ENCODE measurements at regions of chr4 and their contacts with region 1.

Region 1: DNA sequence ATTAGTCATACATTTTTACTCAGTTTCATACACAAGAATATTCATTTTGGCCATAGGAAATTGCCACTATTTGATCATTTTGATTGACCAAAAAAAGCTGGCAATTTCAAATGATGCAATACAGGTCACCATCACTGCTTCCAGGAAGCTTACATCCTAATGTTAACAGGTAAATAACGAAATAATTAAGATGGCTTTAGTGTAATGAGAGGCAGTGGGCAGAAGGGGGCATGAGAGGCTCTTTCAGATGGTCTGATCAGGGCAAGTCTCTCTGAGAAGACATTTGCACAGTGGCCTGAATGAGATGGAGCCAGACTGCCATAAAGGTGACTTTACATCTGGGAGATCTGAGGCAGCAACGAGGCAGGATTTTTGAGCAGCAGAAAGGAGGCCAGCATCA is 170.7 kb downstream of the SLIT2 start:
- DNase-seq: peak; percentile 22
- ATAC-seq: peak; percentile 51
- H3K4me3 ChIP-seq: no peak overlapping the region
- H3K4me3 Mint-ChIP-seq: no peak overlapping the region
- H3K27ac ChIP-seq: no peak overlapping the region
- H3K27ac Mint-ChIP-seq: no peak overlapping the region
- H3K4me1 ChIP-seq: no peaks in the 10 kb centered on the region
- H3K4me1 Mint-ChIP-seq: peaks cover 8% of the 10 kb centered on the region
- H3K27me3 ChIP-seq: no peaks in the 10 kb centered on the region
- H3K27me3 Mint-ChIP-seq: peaks cover 11% of the 10 kb centered on the region
- CTCF ChIP-seq: peak; percentile 36

Region 2: GRCh38 chr4:18689308-18690115 is 1732.9 kb before region 1 on chr4:
- CTCF ChIA-PET with region 1: no interaction called
- POLR2A ChIA-PET with region 1: no interaction called
- intact Hi-C with region 1: loop called (anchors 10 kb)
- DNase-seq: peak; percentile 48
- ATAC-seq: peak; percentile 28
- H3K4me3 ChIP-seq: no peak overlapping the region
- H3K4me3 Mint-ChIP-seq: no peak overlapping the region
- H3K27ac ChIP-seq: no peak overlapping the region
- H3K27ac Mint-ChIP-seq: no peak overlapping the region
- H3K4me1 ChIP-seq: no peaks in the 10 kb centered on the region
- H3K4me1 Mint-ChIP-seq: no peaks in the 10 kb centered on the region
- H3K27me3 ChIP-seq: peaks cover 0 to 3% (median 0%) of the 10 kb centered on the region in 4 experiments
- H3K27me3 Mint-ChIP-seq: peaks cover 3% of the 10 kb centered on the region
- CTCF ChIP-seq: peak; percentile 97

Region 3: GRCh38 chr4:20486432-20486831 is 64.0 kb after region 1 on chr4:
- CTCF ChIA-PET with region 1: no interaction called
- POLR2A ChIA-PET with region 1: no interaction called
- intact Hi-C with region 1: no loop called
- DNase-seq: no peak
- ATAC-seq: no peak
- H3K4me3 ChIP-seq: no peak overlapping the region
- H3K4me3 Mint-ChIP-seq: no peak overlapping the region
- H3K27ac ChIP-seq: no peak overlapping the region
- H3K27ac Mint-ChIP-seq: no peak overlapping the region
- H3K4me1 ChIP-seq: no peaks in the 10 kb centered on the region
- H3K4me1 Mint-ChIP-seq: no peaks in the 10 kb centered on the region
- H3K27me3 ChIP-seq: no peaks in the 10 kb centered on the region
- H3K27me3 Mint-ChIP-seq: no peaks in the 10 kb centered on the region
- CTCF ChIP-seq: no peak

Region 4: DNA sequence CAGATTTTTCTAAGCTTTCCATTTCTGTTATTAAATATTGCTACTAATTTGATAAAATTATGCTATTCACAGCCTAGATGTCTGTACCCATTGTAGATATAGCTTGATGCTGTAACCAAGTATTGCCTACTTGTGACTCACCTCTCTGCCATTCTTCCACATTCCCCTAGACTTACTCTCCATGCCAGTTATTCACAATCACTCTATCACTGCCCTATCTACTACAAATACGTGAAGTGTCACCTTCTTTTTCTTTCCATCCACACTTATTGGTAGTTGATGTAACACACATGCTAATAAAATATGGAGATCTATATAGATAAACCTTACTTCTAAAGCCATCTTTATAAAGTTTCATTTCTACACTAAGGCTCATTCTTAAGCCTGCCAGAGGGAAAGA is 98.5 kb after region 1 on chr4:
- CTCF ChIA-PET with region 1: no interaction called
- POLR2A ChIA-PET with region 1: no interaction called
- intact Hi-C with region 1: no loop called
- DNase-seq: no peak
- ATAC-seq: no peak
- H3K4me3 ChIP-seq: no peak overlapping the region
- H3K4me3 Mint-ChIP-seq: no peak overlapping the region
- H3K27ac ChIP-seq: no peak overlapping the region
- H3K27ac Mint-ChIP-seq: no peak overlapping the region
- H3K4me1 ChIP-seq: no peaks in the 10 kb centered on the region
- H3K4me1 Mint-ChIP-seq: no peaks in the 10 kb centered on the region
- H3K27me3 ChIP-seq: no peaks in the 10 kb centered on the region
- H3K27me3 Mint-ChIP-seq: no peaks in the 10 kb centered on the region
- CTCF ChIP-seq: no peak